Activated T-helper 2 cell treated with anti-CD3 and anti-CD28 coated beads, Interferon-gamma antibody, Interleukin-2, Interleukin-4, amounts not matched to agents 10 μg/mL and 5 μg/mL and 100 μg/mL, durations not matched to agents 14 hours and 24 hours and 36 hours (primary cell): ENCODE measurements at regions of chr12 and their contacts with region 1.

Region 1: GRCh38 chr12:89379234-89379838 is 27.0 kb upstream of the DUSP6 start:
- DNase-seq: no peak
- H3K4me3 Mint-ChIP-seq: no peak overlapping the region
- H3K27ac Mint-ChIP-seq: no peak overlapping the region
- H3K4me1 Mint-ChIP-seq: peaks cover 43% of the 10 kb centered on the region
- H3K27me3 Mint-ChIP-seq: no peaks in the 10 kb centered on the region

Region 2: GRCh38 chr12:89087141-89087834 is 292.0 kb before region 1 on chr12:
- intact Hi-C with region 1: no loop called
- DNase-seq: no peak
- H3K4me3 Mint-ChIP-seq: no peak overlapping the region
- H3K27ac Mint-ChIP-seq: no peak overlapping the region
- H3K4me1 Mint-ChIP-seq: peaks cover 15% of the 10 kb centered on the region
- H3K27me3 Mint-ChIP-seq: no peaks in the 10 kb centered on the region

Region 3: DNA sequence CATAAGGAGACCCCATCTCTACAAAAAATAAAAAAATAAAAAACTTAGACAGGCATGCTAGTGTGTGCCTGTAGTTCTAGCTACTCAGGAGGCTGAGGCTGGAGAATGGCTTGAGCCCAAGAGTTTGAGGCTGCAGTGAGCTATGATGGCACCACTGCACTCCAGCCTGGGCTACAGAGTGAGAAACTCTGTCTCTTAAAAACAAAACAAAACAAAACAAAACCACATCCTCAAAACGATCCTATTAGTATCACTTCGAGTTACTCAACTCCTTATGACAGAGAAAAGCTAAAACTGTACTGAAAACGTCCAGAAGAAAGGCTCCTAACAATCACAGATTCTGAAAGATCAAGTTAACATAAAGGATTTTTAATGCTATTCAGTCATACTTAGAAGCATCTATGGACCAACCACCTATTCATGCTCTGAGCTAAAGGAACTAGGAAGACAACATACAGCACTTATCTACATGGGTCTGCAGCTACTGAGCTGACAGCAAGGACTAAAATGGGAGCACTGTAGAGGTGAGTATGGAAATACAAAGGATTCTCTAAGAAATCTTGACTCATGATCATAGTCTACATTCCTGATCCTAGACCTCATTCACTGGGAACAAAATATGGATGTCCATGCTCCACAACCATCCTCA is 48.3 kb after region 1 on chr12:
- intact Hi-C with region 1: loop called (anchors 5 kb)
- DNase-seq: peak; percentile 18
- H3K4me3 Mint-ChIP-seq: peak overlapping the region; percentile 46
- H3K27ac Mint-ChIP-seq: peak overlapping the region; percentile 73
- H3K4me1 Mint-ChIP-seq: peaks cover 38% of the 10 kb centered on the region
- H3K27me3 Mint-ChIP-seq: no peaks in the 10 kb centered on the region